PC-3 (cell line): ENCODE measurements at regions of chr3 and their contacts with region 1.

Region 1: GRCh38 chr3:153144779-153145178 is 17.2 kb upstream of the RAP2B start:
- DNase-seq: peak; percentile 79
- ATAC-seq: peak; percentile 21
- H3K4me3 ChIP-seq: peak overlapping the region; percentile 28; the same call in 1 of the 2 replicates
- H3K27ac ChIP-seq: peak overlapping the region; percentile 80
- H3K4me1 ChIP-seq: peaks cover 56% of the 10 kb centered on the region
- H3K27me3 ChIP-seq: no peaks in the 10 kb centered on the region
- CTCF ChIP-seq: no peak

Region 2: GRCh38 chr3:152870027-152870426 is 274.8 kb before region 1 on chr3:
- CTCF ChIA-PET with region 1: no interaction called
- POLR2A ChIA-PET with region 1: no interaction called
- intact Hi-C with region 1: loop called (anchors 10 kb)
- DNase-seq: no peak
- ATAC-seq: no peak
- H3K4me3 ChIP-seq: no peak overlapping the region
- H3K27ac ChIP-seq: no peak overlapping the region
- H3K4me1 ChIP-seq: 0 out of 2 replicates have a peak, but pooled peaks cover 4% of the 10 kb centered on the region
- H3K27me3 ChIP-seq: 0 out of 2 replicates have a peak, but pooled peaks cover 8% of the 10 kb centered on the region
- CTCF ChIP-seq: no peak

Region 3: DNA sequence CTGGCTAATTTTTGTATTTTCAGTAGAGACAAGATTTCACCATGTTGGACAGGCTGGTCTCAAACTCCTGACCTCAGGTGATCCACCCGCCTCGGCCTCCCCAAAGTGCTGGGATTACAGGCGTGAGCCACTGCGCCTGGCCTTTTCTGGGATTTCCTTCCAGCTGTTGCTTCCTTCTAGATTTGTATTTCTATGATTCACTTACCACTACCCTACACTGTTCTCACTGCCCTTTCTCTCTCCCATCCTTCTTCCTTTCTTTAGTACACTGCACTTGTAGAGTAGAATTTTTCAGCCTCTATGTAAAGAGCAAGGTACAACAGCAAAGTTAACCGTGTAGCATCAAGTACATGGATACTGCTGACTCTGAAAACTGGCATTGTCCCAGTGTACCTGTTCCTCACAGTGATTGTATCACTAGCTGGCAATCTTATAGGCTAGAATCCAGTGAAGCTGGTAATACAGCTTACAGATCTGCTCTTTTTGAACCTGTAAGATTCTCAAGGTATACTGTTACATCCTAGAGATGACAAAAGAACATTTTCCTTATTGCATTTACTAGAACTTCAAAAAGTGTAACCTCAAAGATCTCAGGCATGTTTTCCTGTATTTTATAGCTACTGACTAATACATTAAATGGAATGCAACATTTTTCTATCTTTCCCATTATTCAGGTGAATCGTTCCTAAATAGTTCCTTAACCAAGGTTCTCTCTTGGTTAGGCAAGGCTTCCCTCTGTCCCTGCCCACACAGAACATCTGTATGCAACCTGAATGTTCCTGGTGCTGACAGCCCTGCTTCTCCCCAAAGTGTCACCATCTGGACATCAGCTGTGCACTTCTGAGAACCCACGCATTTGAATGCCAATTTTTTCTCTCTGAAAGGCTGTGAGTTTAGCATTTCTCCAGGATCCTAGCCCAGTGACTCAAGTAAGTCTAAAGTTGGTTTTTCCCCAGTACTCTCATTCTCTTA is 56.9 kb before region 1 on chr3:
- CTCF ChIA-PET with region 1: no interaction called
- POLR2A ChIA-PET with region 1: no interaction called
- intact Hi-C with region 1: no loop called
- DNase-seq: peak; percentile 75
- ATAC-seq: peak; percentile 83
- H3K4me3 ChIP-seq: no peak overlapping the region
- H3K27ac ChIP-seq: peak overlapping the region; percentile 45
- H3K4me1 ChIP-seq: peaks cover 25% of the 10 kb centered on the region
- H3K27me3 ChIP-seq: no peaks in the 10 kb centered on the region
- CTCF ChIP-seq: no peak

Region 4: DNA sequence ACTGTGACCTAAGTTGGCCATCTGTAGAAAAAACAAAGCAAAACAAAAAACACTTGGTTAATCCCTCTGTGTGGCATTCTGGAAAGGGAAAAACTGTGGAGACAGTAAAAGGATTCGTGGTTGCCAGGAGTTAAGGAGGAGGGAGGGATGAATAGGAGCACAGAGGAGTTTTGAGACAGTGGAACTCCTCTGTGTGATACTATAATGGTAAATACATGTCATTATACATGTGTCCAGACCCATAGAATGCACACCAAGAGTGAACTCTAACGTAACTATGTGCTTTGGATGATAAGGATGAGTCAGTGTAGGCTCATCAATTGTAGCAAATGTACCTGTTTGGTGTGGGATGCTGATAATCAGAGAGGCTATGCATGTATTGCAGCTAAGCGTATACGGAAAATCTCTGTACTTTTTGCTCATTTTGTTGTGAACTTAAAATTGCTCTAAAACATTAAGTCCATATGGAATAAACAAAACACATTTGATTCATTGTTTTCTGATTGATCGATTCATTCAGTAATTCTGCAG is 50.6 kb after region 1 on chr3:
- CTCF ChIA-PET with region 1: no interaction called
- POLR2A ChIA-PET with region 1: no interaction called
- intact Hi-C with region 1: no loop called
- DNase-seq: peak; percentile 25
- ATAC-seq: peak; percentile 24; the same call in 1 of the 2 replicates
- H3K4me3 ChIP-seq: no peak overlapping the region
- H3K27ac ChIP-seq: no peak overlapping the region
- H3K4me1 ChIP-seq: no peaks in the 10 kb centered on the region
- H3K27me3 ChIP-seq: no peaks in the 10 kb centered on the region
- CTCF ChIP-seq: no peak